ENCODE measurements at regions of chr2 and their contacts with region 1.

Region 1: GRCh38 chr2:175366815-175367214 is 185.3 kb upstream of the ATP5MC3 start:
- DNase-seq: peak in 3 of 4 donors; percentile 24 to 37 (median 31)
- ATAC-seq: peak; percentile 64
- H3K4me3 ChIP-seq: no peak overlapping the region
- H3K27ac ChIP-seq: no peak overlapping the region
- H3K4me1 ChIP-seq: no peaks in the 10 kb centered on the region
- H3K27me3 ChIP-seq: no peaks in the 10 kb centered on the region
- CTCF ChIP-seq: peak; percentile 28 to 76 (median 65)
- POLR2A ChIP-seq: no peak

Region 2: GRCh38 chr2:176088048-176088936 is 721.5 kb after region 1 on chr2:
- intact Hi-C with region 1: loop called (anchors 10 kb)
- DNase-seq: peak; percentile 40 to 63 (median 56)
- ATAC-seq: peak; percentile 82
- H3K4me3 ChIP-seq: no peak overlapping the region
- H3K27ac ChIP-seq: no peak overlapping the region
- H3K4me1 ChIP-seq: peaks cover 36% of the 10 kb centered on the region
- H3K27me3 ChIP-seq: peaks cover 6 to 81% of the 10 kb centered on the region in 2 donors
- CTCF ChIP-seq: peak; percentile 43 to 87 (median 62)
- POLR2A ChIP-seq: no peak

Measured in body of pancreas (tissue), 4 donors.